Activated naive CD4-positive, alpha-beta T cell treated with anti-CD3 and anti-CD28 coated beads, Interleukin-2, amount 10 ng/mL, durations not matched to agents 7 days and 5 days (primary cell): ENCODE measurements at regions of chr3 and their contacts with region 1.

Region 1: GRCh38 chr3:42839616-42840015 is 30.4 kb downstream of the ACKR2 start:
- DNase-seq: peak; percentile 44
- H3K4me3 Mint-ChIP-seq: no peak overlapping the region
- H3K27ac Mint-ChIP-seq: no peak overlapping the region
- H3K4me1 Mint-ChIP-seq: no peaks in the 10 kb centered on the region
- H3K27me3 Mint-ChIP-seq: peaks cover 8% of the 10 kb centered on the region

Region 2: DNA sequence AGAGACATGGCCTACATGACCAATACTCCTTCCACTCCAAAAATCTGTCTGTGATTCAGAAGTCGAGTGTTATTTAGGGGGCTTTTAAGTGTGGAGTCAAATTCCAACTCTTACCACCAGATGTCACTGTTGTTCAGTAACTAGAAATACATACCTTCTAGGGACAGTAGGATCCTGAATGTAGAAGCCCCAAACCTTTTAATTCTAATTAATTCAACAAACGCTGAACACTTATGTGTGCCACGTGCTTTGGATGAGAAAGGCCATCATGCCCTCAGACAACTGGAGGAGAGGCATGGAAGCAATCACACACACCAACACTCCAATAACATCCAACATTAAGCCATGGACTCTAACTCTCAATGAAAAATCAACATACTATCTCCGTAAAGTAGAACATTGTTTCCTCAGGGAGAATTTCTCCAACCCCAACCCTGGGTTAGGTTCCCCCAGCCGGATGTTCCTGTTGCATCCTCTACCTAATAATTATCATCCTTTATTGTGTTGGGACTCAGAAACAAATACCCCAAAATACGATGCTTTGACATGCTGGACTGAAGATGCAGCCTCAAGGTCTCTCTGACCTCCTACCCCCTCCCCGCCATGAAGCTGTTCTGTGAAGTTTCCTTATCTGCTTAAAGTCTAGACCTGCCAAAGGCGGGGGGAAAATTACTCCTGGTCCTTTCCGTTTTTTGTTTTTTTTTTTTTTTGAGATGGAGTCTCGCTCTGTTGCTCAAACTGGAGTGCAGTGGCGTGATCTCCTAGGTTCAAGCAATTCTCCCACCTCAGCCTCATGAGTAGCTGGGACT is 58.5 kb before region 1 on chr3:
- CTCF ChIA-PET with region 1: interaction called, 18 read pairs
- DNase-seq: no peak
- H3K4me3 Mint-ChIP-seq: no peak overlapping the region
- H3K27ac Mint-ChIP-seq: no peak overlapping the region
- H3K4me1 Mint-ChIP-seq: peaks cover 2% of the 10 kb centered on the region
- H3K27me3 Mint-ChIP-seq: no peaks in the 10 kb centered on the region

Region 3: GRCh38 chr3:42852441-42852840 is 12.8 kb after region 1 on chr3:
- CTCF ChIA-PET with region 1: interaction called, 12 read pairs
- DNase-seq: no peak
- H3K4me3 Mint-ChIP-seq: no peak overlapping the region
- H3K27ac Mint-ChIP-seq: no peak overlapping the region
- H3K4me1 Mint-ChIP-seq: peaks cover 5% of the 10 kb centered on the region
- H3K27me3 Mint-ChIP-seq: peaks cover 21% of the 10 kb centered on the region

Region 4: GRCh38 chr3:43180027-43180426 is 340.4 kb after region 1 on chr3:
- CTCF ChIA-PET with region 1: no interaction called
- DNase-seq: peak; percentile 62
- H3K4me3 Mint-ChIP-seq: peak overlapping the region; percentile 61
- H3K27ac Mint-ChIP-seq: peak overlapping the region; percentile 95
- H3K4me1 Mint-ChIP-seq: peaks cover 72% of the 10 kb centered on the region
- H3K27me3 Mint-ChIP-seq: peaks cover 7% of the 10 kb centered on the region